ENCODE measurements at regions of chr6 and their contacts with region 1.

Region 1: GRCh38 chr6:157021344-157021992 is 244.3 kb downstream of the ARID1B start:
- DNase-seq: peak; percentile 94
- ATAC-seq: peak; percentile 81
- H3K4me3 Mint-ChIP-seq: peak overlapping the region; percentile 88
- H3K27ac Mint-ChIP-seq: peak overlapping the region; percentile 100
- H3K4me1 Mint-ChIP-seq: peaks cover 53% of the 10 kb centered on the region
- H3K27me3 Mint-ChIP-seq: no peaks in the 10 kb centered on the region

Region 2: DNA sequence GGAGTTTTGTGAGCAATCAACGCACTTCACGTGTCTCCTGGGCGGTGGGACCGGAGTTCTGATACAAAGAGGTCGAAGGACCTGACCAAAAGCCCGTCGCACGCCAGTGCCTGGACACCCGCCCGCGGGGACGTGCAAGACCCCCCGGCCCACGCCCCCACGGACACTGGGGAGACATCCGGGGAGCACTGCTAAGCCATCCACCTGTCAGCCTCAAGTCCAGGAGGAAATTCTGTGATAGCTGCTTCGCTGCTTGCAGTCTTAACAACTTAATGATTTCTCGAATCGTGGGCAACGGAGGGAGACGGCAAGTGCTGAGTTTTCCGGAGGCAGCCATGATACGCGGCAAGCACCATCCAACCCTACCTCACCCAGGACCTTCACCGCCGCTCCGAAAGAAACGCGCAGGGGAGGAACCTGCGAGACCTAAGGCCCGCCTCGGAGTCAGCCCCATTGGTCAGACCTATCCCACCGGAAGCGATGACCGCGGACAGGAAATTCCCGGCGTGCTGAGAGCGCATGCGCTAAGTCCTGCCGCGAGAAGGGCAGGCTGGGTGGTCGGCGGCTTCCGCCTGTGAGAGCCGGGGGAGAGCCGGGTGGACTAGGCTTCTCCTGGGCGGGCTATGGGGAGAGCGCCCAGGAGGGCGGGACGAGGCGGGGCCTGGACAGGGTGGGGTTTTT is 1707.2 kb before region 1 on chr6 and contains the start of gene TFB1M:
- CTCF ChIA-PET with region 1: no interaction called
- POLR2A ChIA-PET with region 1: no interaction called
- intact Hi-C with region 1: loop called in 1 of 2 experiments (anchors 1 kb)
- DNase-seq: peak; percentile 99
- ATAC-seq: peak; percentile 95
- H3K4me3 Mint-ChIP-seq: peak within 1 kb of the TSS; percentile 90
- H3K27ac Mint-ChIP-seq: peak within 1 kb of the TSS; percentile 98
- H3K4me1 Mint-ChIP-seq: peaks cover 39% of the 10 kb centered on the region
- H3K27me3 Mint-ChIP-seq: no peaks in the 10 kb centered on the region
- total RNA-seq, gene TFB1M: 45.5 to 56.4 TPM

Region 3: DNA sequence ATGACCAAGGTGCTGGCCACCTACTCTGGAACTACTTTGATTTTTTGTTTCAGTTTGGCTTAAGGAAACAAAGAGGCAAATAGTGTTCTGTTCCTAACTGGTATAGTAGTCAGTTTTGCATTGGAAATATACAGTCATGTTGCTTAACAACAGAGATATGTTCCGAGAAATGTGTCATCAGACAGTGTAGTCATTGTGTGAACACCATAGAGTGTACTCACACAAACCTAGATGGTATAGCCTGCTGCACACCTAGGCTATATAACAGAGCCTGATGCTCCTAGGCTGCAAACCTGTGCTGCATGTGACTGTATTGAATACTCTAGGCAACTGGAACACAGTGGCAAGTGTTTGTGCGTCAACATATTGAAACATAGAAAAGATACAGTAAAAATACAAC is 163.9 kb before region 1 on chr6:
- CTCF ChIA-PET with region 1: no interaction called
- POLR2A ChIA-PET with region 1: interaction called, 4 read pairs
- intact Hi-C with region 1: loop called in 1 of 2 experiments (anchors 1 kb)
- DNase-seq: peak; percentile 58
- ATAC-seq: peak; percentile 94
- H3K4me3 Mint-ChIP-seq: peak overlapping the region; percentile 4
- H3K27ac Mint-ChIP-seq: peak overlapping the region; percentile 93
- H3K4me1 Mint-ChIP-seq: peaks cover 85% of the 10 kb centered on the region
- H3K27me3 Mint-ChIP-seq: no peaks in the 10 kb centered on the region

Region 4: GRCh38 chr6:156919370-156919769 is 102.1 kb before region 1 on chr6:
- CTCF ChIA-PET with region 1: no interaction called
- POLR2A ChIA-PET with region 1: no interaction called
- intact Hi-C with region 1: no loop called
- DNase-seq: no peak
- ATAC-seq: no peak
- H3K4me3 Mint-ChIP-seq: no peak overlapping the region
- H3K27ac Mint-ChIP-seq: no peak overlapping the region
- H3K4me1 Mint-ChIP-seq: peaks cover 51% of the 10 kb centered on the region
- H3K27me3 Mint-ChIP-seq: no peaks in the 10 kb centered on the region

Region 5: DNA sequence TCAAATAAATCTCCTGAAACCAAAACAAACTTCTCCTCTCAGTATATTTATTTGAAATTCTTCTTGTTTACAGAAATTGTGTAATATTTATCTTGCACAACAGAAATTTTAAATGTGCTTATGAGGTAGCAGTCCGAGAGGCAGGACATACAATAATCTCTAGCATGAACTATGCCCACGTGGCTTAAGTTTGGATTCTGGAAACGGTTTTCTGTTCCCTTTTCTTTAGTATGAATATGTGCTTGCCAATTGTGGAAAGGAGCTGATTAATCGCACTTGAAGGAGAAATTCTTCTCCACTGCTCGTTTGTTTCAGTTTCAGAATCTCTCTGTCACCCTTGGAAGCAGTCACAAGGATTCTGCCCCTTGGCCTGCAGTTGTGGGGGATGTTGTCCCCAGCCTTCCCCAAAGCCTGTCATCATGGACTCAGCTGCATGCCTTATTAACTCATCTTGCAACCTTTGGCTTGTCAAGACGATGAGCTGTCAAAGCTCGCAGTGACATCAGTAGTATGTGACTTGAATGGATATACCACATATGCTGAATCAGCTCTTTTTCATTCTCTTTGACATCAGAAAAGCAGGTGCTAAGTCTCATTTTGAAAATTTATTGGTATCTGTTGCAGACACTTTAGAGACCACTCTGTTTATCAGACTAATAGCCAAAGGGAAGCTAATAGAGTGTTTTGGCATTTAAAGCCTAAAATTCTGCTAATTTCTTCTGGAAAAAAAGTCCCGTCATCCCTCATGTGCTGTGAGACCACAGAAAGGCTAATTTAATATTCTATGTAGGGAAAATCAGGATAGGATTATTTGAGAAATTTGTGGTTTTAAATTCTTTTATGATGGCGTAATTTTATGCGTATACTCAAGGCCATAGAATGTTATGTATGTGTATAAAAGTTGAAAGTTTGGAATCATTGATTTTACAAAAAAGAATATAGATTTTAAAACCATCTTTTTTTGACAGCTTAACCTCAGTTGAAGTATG is 57.5 kb before region 1 on chr6:
- CTCF ChIA-PET with region 1: no interaction called
- POLR2A ChIA-PET with region 1: interaction called, 5 read pairs
- intact Hi-C with region 1: loop called in 1 of 2 experiments (anchors 5 kb)
- DNase-seq: peak; percentile 74
- ATAC-seq: peak; percentile 93
- H3K4me3 Mint-ChIP-seq: no peak overlapping the region
- H3K27ac Mint-ChIP-seq: peak overlapping the region; percentile 31
- H3K4me1 Mint-ChIP-seq: peaks cover 53% of the 10 kb centered on the region
- H3K27me3 Mint-ChIP-seq: no peaks in the 10 kb centered on the region

Region 6: DNA sequence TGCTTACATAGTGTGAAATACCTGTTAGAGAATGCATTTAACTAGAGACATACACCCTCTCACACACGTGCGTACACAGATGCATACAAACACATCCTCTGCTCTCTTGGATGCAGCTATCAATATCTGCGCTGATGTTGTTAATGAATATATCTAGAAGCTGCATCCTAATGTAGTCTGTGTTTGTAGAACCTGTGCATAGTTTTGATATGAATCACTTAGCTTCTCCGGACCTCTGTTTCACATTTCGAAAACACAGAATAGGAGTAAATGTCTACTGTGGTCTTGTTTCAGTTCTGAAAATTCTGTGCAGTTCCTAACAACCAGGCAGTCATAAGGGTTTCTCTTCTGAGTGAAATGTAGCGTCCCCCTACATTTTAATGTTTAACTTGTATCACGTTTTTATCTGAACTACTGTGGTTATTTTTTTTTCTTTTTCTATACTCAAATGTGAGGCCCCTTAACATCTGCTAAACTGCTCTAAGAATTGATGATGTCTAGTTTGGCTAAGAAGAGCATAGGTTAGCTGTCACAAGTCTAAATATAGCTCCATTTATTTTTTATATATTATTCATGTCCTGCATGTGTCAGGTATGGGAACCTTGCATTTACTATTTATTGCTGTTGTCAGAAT is 47.3 kb after region 1 on chr6:
- CTCF ChIA-PET with region 1: no interaction called
- POLR2A ChIA-PET with region 1: no interaction called
- intact Hi-C with region 1: loop called in 1 of 2 experiments (anchors 5 kb)
- DNase-seq: no peak
- ATAC-seq: peak; percentile 94
- H3K4me3 Mint-ChIP-seq: no peak overlapping the region
- H3K27ac Mint-ChIP-seq: peak overlapping the region; percentile 70
- H3K4me1 Mint-ChIP-seq: peaks cover 42% of the 10 kb centered on the region
- H3K27me3 Mint-ChIP-seq: no peaks in the 10 kb centered on the region

Region 7: DNA sequence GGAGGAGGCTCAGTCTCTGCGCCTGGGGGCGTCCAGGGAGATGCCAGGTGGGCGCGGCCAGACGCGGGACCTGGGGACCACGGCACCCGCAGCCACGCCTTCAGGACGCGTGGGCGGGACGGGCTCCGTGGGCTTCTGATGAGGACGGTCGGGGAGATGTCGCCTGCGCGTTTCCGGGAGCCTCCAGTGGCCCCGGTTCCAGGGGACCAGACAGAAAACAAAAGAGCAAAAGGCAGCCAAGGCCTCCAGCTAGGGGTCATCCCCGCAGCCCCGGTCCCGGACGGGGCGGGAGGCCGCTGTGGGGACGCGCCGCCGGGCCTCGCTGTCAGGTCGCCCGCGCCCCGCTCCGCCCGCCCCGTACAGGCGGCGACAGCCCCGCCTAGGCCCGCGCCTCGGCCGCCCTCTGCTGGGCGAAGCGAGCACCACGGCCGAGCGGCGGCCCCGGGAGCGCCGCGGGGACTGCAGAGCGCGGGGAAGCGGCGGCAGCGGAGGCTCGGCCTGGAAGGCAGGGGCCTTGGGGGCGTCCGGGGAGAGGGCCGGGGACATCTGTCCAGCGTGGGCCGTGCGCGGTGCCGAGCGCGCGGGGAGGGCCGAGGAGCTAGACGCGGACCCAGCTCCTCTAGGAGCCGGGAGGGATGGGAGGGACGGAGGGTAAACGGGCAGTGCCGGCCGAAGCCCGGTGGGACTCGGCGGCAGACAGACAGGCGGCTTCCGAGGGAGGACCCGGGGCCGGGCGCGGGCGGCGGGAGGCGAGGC is 253.2 kb after region 1 on chr6:
- CTCF ChIA-PET with region 1: no interaction called
- POLR2A ChIA-PET with region 1: no interaction called
- intact Hi-C with region 1: loop called in 1 of 2 experiments (anchors 1 kb)
- DNase-seq: peak; percentile 89
- ATAC-seq: peak; percentile 93
- H3K4me3 Mint-ChIP-seq: peak overlapping the region; percentile 73
- H3K27ac Mint-ChIP-seq: peak overlapping the region; percentile 83
- H3K4me1 Mint-ChIP-seq: peaks cover 9% of the 10 kb centered on the region
- H3K27me3 Mint-ChIP-seq: no peaks in the 10 kb centered on the region

Measured in activated CD4-positive, alpha-beta T cell treated with anti-CD3 and anti-CD28 coated beads for 36 hours (primary cell).